ENCODE measurements at regions of chr14 and their contacts with region 1.

Region 1: DNA sequence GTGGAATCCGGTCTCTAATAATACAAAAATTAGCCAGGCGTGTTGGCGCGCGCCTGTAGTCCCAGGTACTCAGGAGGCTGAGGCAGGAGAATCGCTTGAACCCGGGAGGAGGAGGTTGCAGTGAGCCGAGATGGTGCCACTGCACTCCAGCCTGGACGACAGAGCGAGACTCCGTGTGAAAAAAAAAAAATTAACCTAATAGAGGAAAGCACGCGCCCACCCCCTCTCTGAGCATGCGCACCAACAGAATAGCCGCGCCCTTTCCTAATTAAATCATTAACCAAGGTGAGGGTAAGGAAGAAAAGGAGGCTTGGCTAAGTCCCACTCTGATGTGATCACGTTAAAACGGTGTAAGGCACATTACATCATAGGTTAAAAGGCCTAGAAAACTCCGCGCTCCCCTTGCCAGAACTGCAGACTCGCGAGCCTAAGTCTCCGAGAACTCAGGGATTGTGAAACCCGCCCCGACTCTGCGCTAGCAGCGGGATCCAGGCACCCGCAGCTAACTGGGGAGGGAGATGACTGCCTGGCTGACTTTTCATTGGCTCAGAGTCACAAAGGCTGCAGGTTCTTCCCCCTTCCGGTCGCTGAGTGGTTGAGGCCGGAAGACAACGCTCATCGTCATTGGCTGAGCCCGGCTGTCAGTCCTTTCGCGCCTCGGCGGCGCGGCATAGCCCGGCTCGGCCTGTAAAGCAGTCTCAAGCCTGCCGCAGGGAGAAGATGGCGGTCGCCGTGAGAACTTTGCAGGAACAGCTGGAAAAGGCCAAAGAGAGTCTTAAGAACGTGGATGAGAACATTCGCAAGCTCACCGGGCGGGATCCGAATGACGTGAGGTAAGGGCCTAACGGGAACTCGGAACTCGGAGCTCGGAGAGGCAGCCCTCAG is at the start of gene PNN:
- DNase-seq: peak; percentile 100
- ATAC-seq: peak; percentile 92
- H3K4me3 ChIP-seq: peak within 1 kb of the TSS; percentile 80 to 96 (median 80)
- H3K27ac ChIP-seq: peak within 1 kb of the TSS; percentile 88
- H3K4me1 ChIP-seq: peaks cover 52% of the 10 kb centered on the region
- H3K27me3 ChIP-seq: peaks cover 0 to 2% of the 10 kb centered on the region in 2 experiments; a peak in 1 of 5 replicates
- CTCF ChIP-seq: 0 out of 2 replicates have a peak, but pooled peaks have one; percentile 2
- EP300 ChIP-seq: peak; percentile 69 to 97
- POLR2A ChIP-seq: peak in 1 of 2 experiments; percentile 98; a peak in 2 of 4 replicates
- RAD21 ChIP-seq: peak; percentile 66
- total RNA-seq, gene PNN: 110 and 214 TPM in 2 replicates

Region 2: DNA sequence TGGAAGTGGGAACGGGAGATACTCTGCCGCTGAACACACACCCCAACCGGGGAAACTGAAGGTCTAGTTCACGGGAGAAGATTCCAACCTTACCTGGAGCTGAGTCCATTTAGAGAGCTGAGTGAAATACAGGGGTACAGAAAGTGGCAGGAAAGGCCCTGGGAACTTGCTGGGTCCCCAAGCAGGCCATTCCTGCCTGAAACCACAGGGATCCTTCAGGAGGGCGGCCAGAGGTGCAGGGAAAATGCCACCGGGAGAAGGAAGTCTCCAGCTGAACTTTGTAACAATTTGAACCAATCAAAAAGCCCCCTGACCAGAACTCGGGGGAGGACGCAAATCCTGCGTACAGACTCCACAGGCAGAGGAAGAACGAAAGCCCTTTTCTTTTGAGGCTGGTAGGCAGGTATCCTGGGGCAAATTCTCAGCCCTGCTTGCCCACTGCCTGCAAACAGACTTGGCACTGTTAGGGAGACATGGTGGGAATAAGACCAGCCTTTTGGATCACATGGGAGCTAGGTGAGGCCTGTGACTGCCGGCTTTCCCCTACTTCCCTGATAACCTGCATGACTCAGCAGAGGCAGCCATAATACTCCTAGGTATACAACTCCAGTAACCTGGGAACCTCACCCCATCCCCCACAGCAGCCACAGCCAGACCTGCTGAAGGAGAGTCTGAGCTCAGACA is 242.7 kb before region 1 on chr14:
- CTCF ChIA-PET with region 1: no interaction called
- POLR2A ChIA-PET with region 1: no interaction called
- in situ Hi-C with region 1: no loop called
- intact Hi-C with region 1: no loop called
- DNase-seq: peak; percentile 25
- ATAC-seq: peak; percentile 66
- H3K4me3 ChIP-seq: no peak overlapping the region
- H3K27ac ChIP-seq: no peak overlapping the region
- H3K4me1 ChIP-seq: no peaks in the 10 kb centered on the region
- H3K27me3 ChIP-seq: no peaks in the 10 kb centered on the region; a peak in 1 of 5 replicates
- CTCF ChIP-seq: no peak
- EP300 ChIP-seq: no peak
- POLR2A ChIP-seq: no peak
- RAD21 ChIP-seq: no peak

Region 3: GRCh38 chr14:39025810-39026627 is 148.8 kb before region 1 on chr14:
- CTCF ChIA-PET with region 1: no interaction called
- POLR2A ChIA-PET with region 1: interaction called, 47 read pairs
- in situ Hi-C with region 1: no loop called
- intact Hi-C with region 1: loop called (anchors 2 kb)
- DNase-seq: peak; percentile 87
- ATAC-seq: peak; percentile 74
- H3K4me3 ChIP-seq: peak overlapping the region in 1 of 3 experiments; percentile 8; a peak in 1 of 6 replicates
- H3K27ac ChIP-seq: peak overlapping the region; percentile 74
- H3K4me1 ChIP-seq: peaks cover 48% of the 10 kb centered on the region
- H3K27me3 ChIP-seq: no peaks in the 10 kb centered on the region
- CTCF ChIP-seq: 0 out of 2 replicates have a peak, but pooled peaks have one; percentile 8
- EP300 ChIP-seq: peak in 1 of 2 experiments; percentile 86; a peak in 2 of 4 replicates
- POLR2A ChIP-seq: no peak
- RAD21 ChIP-seq: peak; percentile 32; the same call in 1 of the 2 replicates

Region 4: DNA sequence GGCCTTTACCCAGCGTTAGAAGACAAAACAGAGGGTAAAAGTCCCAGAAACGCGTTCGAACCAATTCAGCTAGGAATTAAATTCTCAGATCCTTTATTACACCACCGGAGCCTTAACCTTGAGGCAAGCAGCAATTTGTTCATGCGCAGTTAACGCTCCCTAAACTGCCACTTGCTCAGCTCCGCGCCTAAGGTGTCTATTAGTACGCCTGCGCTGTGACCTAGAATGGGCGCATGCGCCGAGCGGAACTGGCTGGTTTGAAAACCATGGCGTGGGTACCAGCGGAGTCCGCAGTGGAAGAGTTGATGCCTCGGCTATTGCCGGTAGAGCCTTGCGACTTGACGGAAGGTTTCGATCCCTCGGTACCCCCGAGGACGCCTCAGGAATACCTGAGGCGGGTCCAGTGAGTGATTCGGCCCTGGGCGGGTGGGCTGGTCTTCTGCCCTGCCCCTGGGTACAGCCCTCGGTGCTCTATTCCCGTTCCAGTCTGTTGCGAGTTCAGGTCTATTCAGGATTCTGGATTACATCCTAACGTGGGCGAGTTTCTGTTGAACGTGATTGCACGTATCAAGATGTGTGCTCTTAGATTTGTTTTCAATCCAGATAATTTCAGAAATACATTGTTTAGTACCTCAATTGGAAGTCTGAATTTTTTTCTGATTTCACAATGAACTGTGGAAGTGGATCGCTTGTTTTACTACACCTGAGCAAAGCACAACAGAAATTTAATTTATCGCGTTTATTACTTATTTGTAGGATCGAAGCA is 60.5 kb before region 1 on chr14 and contains the start of gene GEMIN2:
- CTCF ChIA-PET with region 1: no interaction called
- POLR2A ChIA-PET with region 1: interaction called, 91 read pairs
- in situ Hi-C with region 1: loop called (anchors 5 kb)
- intact Hi-C with region 1: loop called (anchors 1 kb)
- DNase-seq: peak; percentile 97
- ATAC-seq: peak; percentile 99
- H3K4me3 ChIP-seq: peak within 1 kb of the TSS; percentile 71 to 90 (median 76)
- H3K27ac ChIP-seq: peak within 1 kb of the TSS; percentile 40
- H3K4me1 ChIP-seq: peaks cover 33% of the 10 kb centered on the region
- H3K27me3 ChIP-seq: no peaks in the 10 kb centered on the region; a peak in 1 of 5 replicates
- CTCF ChIP-seq: peak; percentile 26
- EP300 ChIP-seq: peak in 1 of 2 experiments; percentile 13; a peak in 2 of 4 replicates
- POLR2A ChIP-seq: peak; percentile 89 to 99; a peak in 3 of 4 replicates
- RAD21 ChIP-seq: peak; percentile 29; the same call in 1 of the 2 replicates
- total RNA-seq, gene GEMIN2: 110 and 160 TPM in 2 replicates

Region 5: DNA sequence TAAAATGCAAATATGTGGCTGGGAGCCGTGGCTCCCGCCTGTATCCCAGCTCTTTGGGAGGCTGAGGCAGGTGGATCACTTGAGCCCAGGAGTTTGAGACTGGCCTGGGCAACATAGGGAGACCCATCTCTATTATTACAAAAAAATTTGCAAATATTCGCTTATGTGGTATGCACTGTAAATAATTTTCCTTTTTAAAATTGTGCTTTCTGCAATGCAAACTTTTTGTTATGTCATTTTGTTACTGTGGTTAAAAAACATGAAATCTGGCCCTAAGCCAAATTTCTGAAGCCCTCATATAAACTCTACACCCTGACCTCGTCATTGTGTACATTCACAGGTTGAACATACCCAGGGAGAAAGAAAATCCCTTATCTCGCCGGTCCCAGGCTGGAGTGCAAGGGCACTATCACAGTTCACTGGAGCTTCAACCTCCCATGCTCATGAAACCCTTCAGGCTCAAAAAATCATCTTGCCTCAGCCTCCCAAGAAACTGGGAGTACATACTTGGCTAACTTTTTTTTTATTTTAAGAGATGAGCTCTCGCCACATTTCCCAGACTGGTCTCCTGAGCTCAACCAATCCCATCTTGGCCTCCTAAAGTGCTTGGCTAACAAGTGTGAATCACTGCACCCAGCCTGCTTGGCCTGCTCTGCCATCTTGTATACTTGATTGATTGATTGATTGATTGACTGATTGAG is 29.4 kb before region 1 on chr14:
- CTCF ChIA-PET with region 1: no interaction called
- POLR2A ChIA-PET with region 1: interaction called, 33 read pairs
- in situ Hi-C with region 1: no loop called
- intact Hi-C with region 1: loop called (anchors 1 kb)
- DNase-seq: peak; percentile 93
- ATAC-seq: peak; percentile 99
- H3K4me3 ChIP-seq: no peak overlapping the region
- H3K27ac ChIP-seq: peak overlapping the region; percentile 47
- H3K4me1 ChIP-seq: peaks cover 13% of the 10 kb centered on the region
- H3K27me3 ChIP-seq: no peaks in the 10 kb centered on the region
- CTCF ChIP-seq: no peak
- EP300 ChIP-seq: peak in 1 of 2 experiments; percentile 63; a peak in 3 of 4 replicates
- POLR2A ChIP-seq: 0 out of 4 replicates have a peak, but pooled peaks of 1 of the 2 experiments have one; percentile 3
- RAD21 ChIP-seq: peak; percentile 39; the same call in 1 of the 2 replicates

Region 6: GRCh38 chr14:39186941-39187525 is 12.2 kb after region 1 on chr14:
- CTCF ChIA-PET with region 1: no interaction called
- POLR2A ChIA-PET with region 1: interaction called, 99 read pairs
- in situ Hi-C with region 1: no loop called
- intact Hi-C with region 1: no loop called
- DNase-seq: no peak
- ATAC-seq: peak; percentile 58
- H3K4me3 ChIP-seq: no peak overlapping the region
- H3K27ac ChIP-seq: peak overlapping the region; percentile 3
- H3K4me1 ChIP-seq: peaks cover 12% of the 10 kb centered on the region
- H3K27me3 ChIP-seq: no peaks in the 10 kb centered on the region
- CTCF ChIP-seq: no peak
- EP300 ChIP-seq: no peak
- POLR2A ChIP-seq: no peak; a peak in 1 of 4 replicates
- RAD21 ChIP-seq: no peak

Region 7: DNA sequence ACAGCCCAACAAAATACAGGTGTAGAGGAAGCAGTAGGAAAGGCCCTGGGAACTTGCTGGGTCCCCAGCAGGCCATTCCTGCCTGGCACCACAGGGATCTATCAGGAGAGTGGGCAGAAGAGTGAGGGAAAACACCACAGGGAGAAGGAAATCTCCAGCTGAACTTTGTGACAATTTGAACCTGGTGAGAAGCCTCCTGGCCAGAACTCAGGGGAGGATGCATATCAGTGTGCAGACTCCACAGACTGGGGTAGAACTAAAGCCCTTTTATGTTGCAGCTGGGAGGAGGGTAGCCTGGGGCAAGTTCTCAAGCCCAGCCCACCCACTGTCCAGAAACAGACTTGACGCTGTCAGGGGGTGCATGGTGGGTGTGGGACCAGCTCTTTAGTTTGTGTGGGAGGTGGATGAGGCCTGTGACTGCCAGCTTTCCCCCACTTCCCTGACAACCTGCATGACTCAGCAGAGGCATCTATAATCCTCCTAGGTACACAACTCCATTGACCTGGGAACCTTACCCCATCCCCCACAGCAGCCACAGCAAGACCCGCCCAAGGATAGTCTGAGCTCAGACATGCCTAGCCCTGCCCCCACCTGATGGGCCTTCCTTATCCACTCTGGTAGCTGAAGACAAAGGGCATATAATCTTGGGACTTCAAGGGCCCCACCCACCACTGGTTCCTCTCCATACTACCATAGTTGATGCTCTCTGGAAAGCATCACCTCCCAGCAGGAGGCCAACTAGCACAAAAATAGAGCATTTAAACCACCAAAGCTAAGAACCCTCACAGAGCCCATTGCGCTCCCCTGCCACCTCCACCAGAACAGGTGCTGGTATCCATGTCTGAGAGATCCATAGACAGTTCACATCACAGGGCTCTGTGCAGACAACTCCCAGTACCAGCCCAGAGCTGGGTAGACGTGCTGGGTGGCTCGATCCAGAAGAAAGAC is 29.1 kb after region 1 on chr14:
- CTCF ChIA-PET with region 1: no interaction called
- POLR2A ChIA-PET with region 1: interaction called, 45 read pairs
- in situ Hi-C with region 1: no loop called
- intact Hi-C with region 1: no loop called
- DNase-seq: peak; percentile 70
- ATAC-seq: peak; percentile 83
- H3K4me3 ChIP-seq: peak overlapping the region in 1 of 3 experiments; percentile 27; a peak in 2 of 6 replicates
- H3K27ac ChIP-seq: peak overlapping the region; percentile 49
- H3K4me1 ChIP-seq: peaks cover 30% of the 10 kb centered on the region
- H3K27me3 ChIP-seq: no peaks in the 10 kb centered on the region
- CTCF ChIP-seq: no peak
- EP300 ChIP-seq: no peak
- POLR2A ChIP-seq: no peak
- RAD21 ChIP-seq: no peak